Dorsolateral prefrontal cortex (tissue), 120 donors: ENCODE measurements at regions of chr5 and their contacts with region 1.

Region 1: DNA sequence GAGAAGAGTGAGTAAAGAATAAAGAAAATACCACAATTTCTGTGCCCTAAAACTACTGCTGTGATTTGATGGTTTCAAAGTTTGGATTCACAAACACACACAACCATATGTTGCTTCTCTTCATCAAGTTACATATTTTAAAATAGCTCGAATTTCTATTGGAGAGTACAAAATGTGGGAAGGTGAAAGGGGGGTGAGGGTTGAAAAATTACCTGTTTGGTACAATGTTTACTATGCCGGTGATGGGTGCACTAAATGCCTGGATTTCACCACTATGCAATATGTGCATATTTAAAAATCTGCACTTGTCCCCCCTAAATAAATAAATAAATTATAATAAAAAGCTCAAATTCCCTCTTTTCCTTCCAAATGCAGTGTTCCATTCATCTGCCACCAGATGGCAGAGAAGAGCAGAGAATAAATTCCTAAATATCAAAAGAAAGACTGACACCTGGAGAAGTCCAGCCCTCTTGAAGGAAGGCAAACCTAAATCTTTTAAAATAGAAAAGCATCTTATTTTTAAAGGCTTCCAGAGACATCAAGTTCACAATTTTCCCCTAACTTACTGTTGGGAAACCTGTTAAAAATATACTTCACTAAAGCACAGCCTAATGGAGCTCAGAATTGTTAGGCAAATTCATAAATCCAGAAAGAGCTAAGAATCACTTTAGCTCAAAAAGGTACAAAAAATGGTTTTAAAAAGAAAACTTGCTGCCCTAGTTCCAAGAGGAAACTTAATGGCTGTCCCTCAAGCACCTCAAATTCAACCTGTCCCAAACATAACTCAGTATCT is 24.8 kb upstream of the HNRNPA0 start:
- DNase-seq: peak in 1 of 10 donors; percentile 8
- H3K4me3 ChIP-seq: no peak overlapping the region
- H3K27ac ChIP-seq: peak overlapping the region in 25 of 59 donors; percentile 1 to 61 (median 17)
- H3K27me3 ChIP-seq: no peaks in the 10 kb centered on the region
- CTCF ChIP-seq: peak; percentile 82 to 98 (median 90)

Region 2: GRCh38 chr5:137822158-137822764 is 43.3 kb after region 1 on chr5:
- intact Hi-C with region 1: loop called (anchors 2 to 5 kb)
- DNase-seq: peak in 7 of 10 donors; percentile 15 to 67 (median 42)
- H3K4me3 ChIP-seq: no peak overlapping the region
- H3K27ac ChIP-seq: peak overlapping the region in 22 of 59 donors; percentile 7 to 67 (median 31)
- H3K27me3 ChIP-seq: no peaks in the 10 kb centered on the region
- CTCF ChIP-seq: peak in 53 of 56 donors; percentile 23 to 73 (median 50)

Region 3: DNA sequence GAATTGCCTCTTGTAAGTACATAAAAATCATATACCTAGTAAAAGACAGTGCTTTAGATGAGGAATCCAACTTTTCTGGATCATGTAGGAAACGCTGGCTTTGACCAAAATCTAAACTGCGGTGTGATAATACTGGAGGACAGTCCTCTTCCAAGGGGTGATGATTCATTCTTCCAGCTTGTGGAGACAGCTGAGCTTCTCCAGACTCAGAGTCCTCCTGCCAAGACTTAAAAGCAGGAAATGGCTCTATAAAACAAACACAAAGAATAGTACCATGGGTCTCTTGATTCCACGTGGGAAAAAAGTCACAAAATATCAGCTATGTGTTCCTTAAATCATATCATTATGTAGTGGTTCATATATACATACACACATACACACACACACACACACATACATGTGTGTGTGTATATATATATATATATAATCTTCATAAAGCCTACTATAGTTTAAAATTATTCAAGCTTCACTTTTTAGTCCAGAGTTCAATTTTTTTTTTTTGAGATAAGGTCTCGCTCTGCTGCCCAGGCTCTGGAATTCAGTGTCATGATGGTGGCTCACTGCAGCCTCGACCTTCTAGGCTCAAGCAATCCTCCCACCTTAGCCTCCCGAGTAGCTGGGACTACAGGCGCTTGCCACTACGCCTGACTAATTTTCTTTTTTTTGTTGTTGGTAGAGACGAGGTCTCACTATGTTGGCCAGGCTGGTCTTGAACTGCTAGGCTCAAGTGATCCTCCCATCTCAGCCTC is 175.3 kb after region 1 on chr5:
- intact Hi-C with region 1: no loop called
- DNase-seq: no peak
- H3K4me3 ChIP-seq: no peak overlapping the region
- H3K27ac ChIP-seq: peak overlapping the region in 39 of 59 donors; percentile 1 to 71 (median 44)
- H3K27me3 ChIP-seq: no peaks in the 10 kb centered on the region
- CTCF ChIP-seq: no peak

Region 4: GRCh38 chr5:138148811-138149210 is 369.8 kb after region 1 on chr5:
- intact Hi-C with region 1: loop called in 1 of 2 experiments (anchors 10 kb)
- DNase-seq: no peak
- H3K4me3 ChIP-seq: no peak overlapping the region
- H3K27ac ChIP-seq: no peak overlapping the region
- H3K27me3 ChIP-seq: no peaks in the 10 kb centered on the region
- CTCF ChIP-seq: no peak